B cell (primary cell): ENCODE measurements at regions of chr11 and their contacts with region 1.

Region 1: DNA sequence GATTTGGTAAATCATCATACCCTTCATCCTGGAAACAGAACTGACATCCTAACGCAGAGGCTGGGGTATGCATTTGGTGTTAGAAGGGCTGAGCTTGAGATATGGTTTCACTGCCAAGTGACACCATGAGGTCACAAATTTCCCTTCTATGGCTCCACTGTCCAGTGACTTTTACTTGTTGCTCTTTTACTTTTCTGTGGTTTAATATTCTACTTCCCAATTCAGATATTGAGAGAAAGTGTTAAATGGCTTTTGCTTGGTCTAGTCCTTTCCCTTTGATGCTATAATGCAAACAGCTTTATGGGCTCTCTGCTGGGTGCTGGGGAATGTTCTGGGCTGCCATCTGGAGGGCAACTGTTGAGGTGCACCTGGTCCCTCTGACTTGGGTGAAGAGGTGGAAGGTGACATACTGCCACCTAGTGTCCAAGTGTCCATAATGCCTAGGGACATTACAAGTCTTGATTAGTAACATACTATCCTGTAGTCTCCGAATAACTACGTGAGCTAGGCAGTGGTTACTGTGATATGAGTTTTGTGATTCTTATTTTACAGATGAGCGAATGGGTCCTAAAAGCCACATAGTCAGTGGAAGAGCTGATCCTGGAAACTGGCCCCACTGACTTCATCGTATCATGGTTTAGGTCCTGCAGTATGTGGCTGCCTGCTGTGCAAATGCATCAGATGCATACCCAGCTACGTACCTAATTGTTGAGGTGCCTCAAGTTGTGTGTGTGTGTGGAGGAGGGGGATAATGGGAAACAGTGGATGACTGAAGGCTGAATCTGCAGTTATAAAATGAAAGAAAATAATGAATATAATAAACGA is 149.1 kb upstream of the RAG2 start:
- DNase-seq: peak; percentile 87
- ATAC-seq: peak; percentile 99
- H3K4me3 ChIP-seq: no peak overlapping the region
- H3K4me3 Mint-ChIP-seq: no peak overlapping the region
- H3K27ac ChIP-seq: no peak overlapping the region
- H3K27ac Mint-ChIP-seq: no peak overlapping the region
- H3K4me1 ChIP-seq: no peaks in the 10 kb centered on the region
- H3K4me1 Mint-ChIP-seq: peaks cover 11% of the 10 kb centered on the region
- H3K27me3 ChIP-seq: peaks cover 0 to 10% (median 0%) of the 10 kb centered on the region in 4 experiments
- H3K27me3 Mint-ChIP-seq: peaks cover 17% of the 10 kb centered on the region
- CTCF ChIP-seq: peak; percentile 97

Region 2: GRCh38 chr11:36564376-36565030 is 182.6 kb before region 1 on chr11:
- CTCF ChIA-PET with region 1: interaction called, 29 read pairs
- POLR2A ChIA-PET with region 1: no interaction called
- intact Hi-C with region 1: no loop called
- DNase-seq: peak; percentile 50
- ATAC-seq: no peak
- H3K4me3 ChIP-seq: peak overlapping the region in 1 of 5 experiments; percentile 39
- H3K4me3 Mint-ChIP-seq: peak overlapping the region; percentile 66
- H3K27ac ChIP-seq: no peak overlapping the region
- H3K27ac Mint-ChIP-seq: no peak overlapping the region
- H3K4me1 ChIP-seq: peaks cover 0 to 5% of the 10 kb centered on the region in 2 donors
- H3K4me1 Mint-ChIP-seq: peaks cover 6% of the 10 kb centered on the region
- H3K27me3 ChIP-seq: peaks cover 0 to 26% (median 11%) of the 10 kb centered on the region in 4 experiments
- H3K27me3 Mint-ChIP-seq: peaks cover 48% of the 10 kb centered on the region
- CTCF ChIP-seq: peak; percentile 58

Region 3: DNA sequence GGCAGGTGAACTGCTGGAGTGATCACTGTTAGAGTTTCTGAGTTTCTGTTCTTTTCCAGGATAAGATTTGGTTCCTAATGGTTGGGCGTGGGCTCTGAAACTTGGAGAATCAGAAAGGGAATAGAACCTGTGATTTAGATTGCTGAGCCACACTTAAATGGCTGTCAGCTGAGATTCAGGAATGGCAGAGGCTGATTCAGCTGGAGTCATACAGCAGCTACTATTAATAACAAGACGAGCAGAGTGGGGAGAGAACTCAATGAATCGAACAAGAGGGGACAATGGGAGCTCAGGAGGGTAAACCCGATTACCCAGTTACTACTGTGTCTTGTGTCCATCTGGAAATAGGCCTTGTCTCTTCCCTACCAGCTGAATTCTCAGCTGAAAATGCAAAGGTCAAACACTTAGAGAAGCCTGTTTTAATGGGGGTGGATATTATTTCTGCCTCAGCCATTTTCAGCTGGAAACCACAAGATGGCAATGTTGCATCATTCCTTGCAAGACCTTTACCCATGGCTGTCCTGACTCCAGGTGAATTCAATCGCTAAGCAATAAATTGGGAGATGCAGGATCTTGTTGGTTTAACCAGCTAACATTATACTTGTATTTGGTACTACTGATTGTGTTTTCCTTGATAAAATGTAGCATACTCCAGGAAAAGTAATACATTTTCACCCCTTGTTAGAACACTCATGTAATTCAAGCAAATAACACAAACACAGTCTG is 44.6 kb before region 1 on chr11:
- CTCF ChIA-PET with region 1: interaction called, 40 read pairs
- POLR2A ChIA-PET with region 1: no interaction called
- intact Hi-C with region 1: loop called (anchors 1 kb)
- DNase-seq: peak; percentile 53
- ATAC-seq: no peak
- H3K4me3 ChIP-seq: no peak overlapping the region
- H3K4me3 Mint-ChIP-seq: no peak overlapping the region
- H3K27ac ChIP-seq: no peak overlapping the region
- H3K27ac Mint-ChIP-seq: no peak overlapping the region
- H3K4me1 ChIP-seq: no peaks in the 10 kb centered on the region
- H3K4me1 Mint-ChIP-seq: no peaks in the 10 kb centered on the region
- H3K27me3 ChIP-seq: no peaks in the 10 kb centered on the region
- H3K27me3 Mint-ChIP-seq: no peaks in the 10 kb centered on the region
- CTCF ChIP-seq: peak; percentile 72

Region 4: GRCh38 chr11:36729825-36730224 is 17.3 kb before region 1 on chr11:
- CTCF ChIA-PET with region 1: interaction called, 13 read pairs
- POLR2A ChIA-PET with region 1: no interaction called
- intact Hi-C with region 1: no loop called
- DNase-seq: no peak
- ATAC-seq: no peak
- H3K4me3 ChIP-seq: no peak overlapping the region
- H3K4me3 Mint-ChIP-seq: no peak overlapping the region
- H3K27ac ChIP-seq: no peak overlapping the region
- H3K27ac Mint-ChIP-seq: no peak overlapping the region
- H3K4me1 ChIP-seq: peaks cover 4 to 7% of the 10 kb centered on the region in 2 donors
- H3K4me1 Mint-ChIP-seq: peaks cover 5% of the 10 kb centered on the region
- H3K27me3 ChIP-seq: no peaks in the 10 kb centered on the region
- H3K27me3 Mint-ChIP-seq: peaks cover 9% of the 10 kb centered on the region
- CTCF ChIP-seq: no peak

Region 5: GRCh38 chr11:36774603-36775002 is 27.5 kb after region 1 on chr11:
- CTCF ChIA-PET with region 1: interaction called, 12 read pairs
- POLR2A ChIA-PET with region 1: no interaction called
- intact Hi-C with region 1: no loop called
- DNase-seq: no peak
- ATAC-seq: no peak
- H3K4me3 ChIP-seq: no peak overlapping the region
- H3K4me3 Mint-ChIP-seq: no peak overlapping the region
- H3K27ac ChIP-seq: no peak overlapping the region
- H3K27ac Mint-ChIP-seq: no peak overlapping the region
- H3K4me1 ChIP-seq: no peaks in the 10 kb centered on the region
- H3K4me1 Mint-ChIP-seq: no peaks in the 10 kb centered on the region
- H3K27me3 ChIP-seq: peaks cover 0 to 3% (median 0%) of the 10 kb centered on the region in 4 experiments
- H3K27me3 Mint-ChIP-seq: peaks cover 10% of the 10 kb centered on the region
- CTCF ChIP-seq: no peak

Region 6: GRCh38 chr11:37595845-37596244 is 848.7 kb after region 1 on chr11:
- CTCF ChIA-PET with region 1: no interaction called
- POLR2A ChIA-PET with region 1: no interaction called
- intact Hi-C with region 1: no loop called
- DNase-seq: no peak
- ATAC-seq: no peak
- H3K4me3 ChIP-seq: no peak overlapping the region
- H3K4me3 Mint-ChIP-seq: no peak overlapping the region
- H3K27ac ChIP-seq: no peak overlapping the region
- H3K27ac Mint-ChIP-seq: no peak overlapping the region
- H3K4me1 ChIP-seq: no peaks in the 10 kb centered on the region
- H3K4me1 Mint-ChIP-seq: no peaks in the 10 kb centered on the region
- H3K27me3 ChIP-seq: no peaks in the 10 kb centered on the region
- H3K27me3 Mint-ChIP-seq: no peaks in the 10 kb centered on the region
- CTCF ChIP-seq: no peak